ENCODE measurements at regions of chr7 and their contacts with region 1.

Region 1: GRCh38 chr7:66493235-66494181 is 135.2 kb upstream of the KCTD7 start:
- DNase-seq: peak; percentile 89 to 99
- H3K4me3 ChIP-seq: peak overlapping the region; percentile 61 to 76
- H3K27ac ChIP-seq: peak overlapping the region; percentile 89 to 94
- H3K4me1 ChIP-seq: peaks cover 0 to 6% of the 10 kb centered on the region in 2 donors
- H3K27me3 ChIP-seq: no peaks in the 10 kb centered on the region
- CTCF ChIP-seq: peak; percentile 29 to 54 (median 38)

Region 2: GRCh38 chr7:66204822-66205740 is 288.4 kb before region 1 on chr7 and contains the start of gene TPST1:
- intact Hi-C with region 1: loop called (anchors 10 kb)
- DNase-seq: peak; percentile 37 to 94
- H3K4me3 ChIP-seq: peak within 1 kb of the TSS; percentile 80 to 90
- H3K27ac ChIP-seq: peak within 1 kb of the TSS; percentile 59 to 65
- H3K4me1 ChIP-seq: peaks cover 0 to 3% of the 10 kb centered on the region in 2 donors
- H3K27me3 ChIP-seq: no peaks in the 10 kb centered on the region
- CTCF ChIP-seq: peak; percentile 56 to 73 (median 67)
- total RNA-seq, gene TPST1: 21.9 TPM

Region 3: GRCh38 chr7:66634816-66635215 is 141.3 kb after region 1 on chr7:
- intact Hi-C with region 1: no loop called
- DNase-seq: no peak
- H3K4me3 ChIP-seq: no peak overlapping the region
- H3K27ac ChIP-seq: no peak overlapping the region
- H3K4me1 ChIP-seq: peaks cover 6 to 8% of the 10 kb centered on the region in 2 donors
- H3K27me3 ChIP-seq: no peaks in the 10 kb centered on the region
- CTCF ChIP-seq: no peak

Region 4: DNA sequence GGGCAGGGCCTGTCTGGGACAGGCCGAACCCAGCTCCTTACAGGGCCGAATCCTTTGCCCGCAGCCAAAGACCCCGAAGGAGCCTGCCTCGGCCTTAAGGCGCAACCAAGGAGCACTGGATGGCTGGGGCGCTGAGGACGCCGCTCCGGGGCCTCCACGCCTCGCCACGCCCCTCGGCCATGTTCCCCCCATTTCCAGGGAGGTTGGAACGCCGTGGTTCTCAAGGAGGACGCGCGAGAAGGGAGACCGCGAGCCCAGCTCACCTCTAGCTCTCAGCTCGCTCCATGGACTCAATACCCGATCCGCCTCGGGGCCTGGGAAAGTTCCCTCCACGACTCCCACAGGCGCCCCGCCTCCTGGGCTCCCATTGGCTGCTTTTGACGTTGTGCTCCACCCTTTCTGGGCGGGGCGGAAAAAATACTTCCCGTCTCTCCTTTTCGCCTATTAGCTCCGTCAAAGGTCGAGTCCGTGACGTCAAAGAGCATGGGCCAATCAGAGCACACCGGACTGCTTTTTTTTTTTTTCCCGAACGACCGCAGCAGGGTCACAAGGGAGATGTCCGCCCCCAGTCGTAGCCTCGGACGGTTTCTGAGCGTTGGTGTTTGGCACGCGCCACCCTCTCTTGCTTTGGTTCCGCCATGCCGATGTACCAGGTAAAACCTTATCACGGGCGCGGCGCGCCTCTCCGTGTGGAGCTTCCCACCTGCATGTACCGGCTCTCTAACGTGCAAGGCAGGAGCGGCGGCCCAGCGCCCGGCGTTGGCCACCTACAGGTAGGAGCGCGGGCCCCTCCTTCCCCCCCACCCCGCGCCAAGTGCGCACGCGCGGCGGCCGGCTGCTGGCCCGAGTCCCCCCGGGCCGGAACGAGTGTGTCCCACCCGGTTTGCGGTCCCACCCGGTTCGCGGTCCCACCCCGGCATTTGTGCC is 808.9 kb after region 1 on chr7:
- intact Hi-C with region 1: loop called (anchors 10 kb)
- DNase-seq: peak; percentile 97 to 100
- H3K4me3 ChIP-seq: peak overlapping the region; percentile 62 to 79
- H3K27ac ChIP-seq: peak overlapping the region; percentile 87 to 90
- H3K4me1 ChIP-seq: peaks cover 0 to 10% of the 10 kb centered on the region in 2 donors
- H3K27me3 ChIP-seq: no peaks in the 10 kb centered on the region
- CTCF ChIP-seq: peak; percentile 20 to 45 (median 41)

Measured in ascending aorta (tissue), 2 donors.